B cell (primary cell): ENCODE measurements at regions of chr19 and their contacts with region 1.

Region 1: DNA sequence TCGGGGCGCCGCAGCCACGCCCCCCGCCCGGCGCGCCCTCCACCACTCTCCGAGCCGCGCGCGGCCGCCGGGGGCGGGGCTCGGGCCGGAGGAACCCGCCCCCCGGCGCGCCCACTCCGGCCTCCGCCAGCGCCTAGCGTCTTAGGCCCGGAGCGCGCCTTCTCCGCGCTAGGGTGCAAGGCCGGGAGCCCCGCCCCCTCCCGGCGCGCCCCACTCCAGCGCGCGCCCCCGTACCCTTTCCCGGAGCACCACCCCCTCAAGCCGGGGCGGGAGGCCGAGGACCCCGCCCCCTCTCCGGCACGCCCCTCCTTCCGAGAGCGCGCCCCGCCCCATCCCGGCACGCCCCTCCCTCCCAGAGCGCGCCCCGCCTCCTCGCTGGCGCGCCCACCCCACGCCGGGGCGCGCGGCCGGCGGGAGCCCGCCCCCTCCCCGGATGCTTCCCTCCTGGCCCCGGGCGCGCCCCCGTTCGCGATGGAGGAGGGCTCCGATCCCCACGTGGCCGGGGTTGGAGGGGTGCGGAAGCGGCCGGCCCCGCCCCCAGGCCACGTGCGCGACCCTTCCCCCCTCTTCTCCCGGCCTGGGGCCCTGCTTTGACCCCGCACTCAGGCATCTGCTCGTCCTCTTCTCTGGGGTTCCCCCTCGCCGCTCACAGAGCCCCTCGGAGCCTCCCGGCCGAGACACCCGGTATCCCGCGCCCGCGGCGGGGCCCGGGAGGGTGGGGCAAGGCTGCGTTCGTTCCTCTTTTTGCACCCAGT is 524 bp upstream of the KLF16 start:
- DNase-seq: peak; percentile 97
- ATAC-seq: peak; percentile 66
- H3K4me3 ChIP-seq: peak overlapping the region in 4 of 5 experiments; percentile 67 to 90 (median 72)
- H3K4me3 Mint-ChIP-seq: peak overlapping the region; percentile 82
- H3K27ac ChIP-seq: peak overlapping the region; percentile 90 to 95
- H3K27ac Mint-ChIP-seq: peak overlapping the region; percentile 93
- H3K4me1 ChIP-seq: peaks cover 26 to 42% of the 10 kb centered on the region in 2 donors
- H3K4me1 Mint-ChIP-seq: peaks cover 33% of the 10 kb centered on the region
- H3K27me3 ChIP-seq: no peaks in the 10 kb centered on the region
- H3K27me3 Mint-ChIP-seq: no peaks in the 10 kb centered on the region
- CTCF ChIP-seq: no peak

Region 2: DNA sequence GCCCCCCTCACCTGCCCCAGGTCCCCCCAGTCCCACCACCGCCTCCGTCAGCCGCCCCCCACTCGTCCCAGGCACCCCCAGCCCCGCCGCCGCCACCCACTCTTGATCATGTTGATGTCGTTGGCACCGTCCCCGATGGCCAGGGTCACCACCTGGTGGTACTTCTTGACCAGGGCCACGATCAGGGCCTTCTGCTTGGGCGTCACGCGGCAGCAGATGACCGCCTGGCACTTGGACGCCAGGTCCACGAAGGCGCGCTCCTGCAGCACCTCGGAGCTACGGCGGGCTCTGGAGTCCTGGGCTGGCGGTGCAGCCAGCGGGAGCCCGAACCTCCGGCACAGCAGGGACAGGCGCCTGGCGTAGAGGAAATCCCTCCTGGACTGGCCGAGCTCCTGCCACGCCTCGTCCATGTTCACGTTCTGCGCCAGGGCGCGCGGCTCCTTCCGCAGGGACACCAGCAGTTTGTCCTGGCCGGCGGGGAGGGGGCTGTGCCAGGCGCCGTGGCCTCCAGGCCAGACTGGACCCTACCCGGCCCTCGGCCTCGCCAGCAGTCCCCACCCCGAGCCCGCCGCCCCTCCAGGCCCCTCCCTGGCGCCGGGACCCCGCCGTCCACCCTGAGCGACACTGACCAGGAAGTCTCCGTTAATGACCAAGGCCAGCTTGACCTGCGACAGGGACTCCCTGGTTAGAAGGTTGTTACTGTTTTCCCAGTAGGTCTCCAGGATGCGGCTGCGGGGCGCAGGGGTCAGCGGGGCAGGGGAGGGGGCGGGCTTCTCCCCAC is 74.5 kb before region 1 on chr19:
- CTCF ChIA-PET with region 1: no interaction called
- POLR2A ChIA-PET with region 1: no interaction called
- intact Hi-C with region 1: no loop called
- DNase-seq: no peak
- ATAC-seq: no peak
- H3K4me3 ChIP-seq: no peak overlapping the region
- H3K4me3 Mint-ChIP-seq: no peak overlapping the region
- H3K27ac ChIP-seq: no peak overlapping the region
- H3K27ac Mint-ChIP-seq: no peak overlapping the region
- H3K4me1 ChIP-seq: peaks cover 0 to 3% of the 10 kb centered on the region in 2 donors
- H3K4me1 Mint-ChIP-seq: no peaks in the 10 kb centered on the region
- H3K27me3 ChIP-seq: peaks cover 0 to 39% (median 2%) of the 10 kb centered on the region in 4 experiments
- H3K27me3 Mint-ChIP-seq: peaks cover 8% of the 10 kb centered on the region
- CTCF ChIP-seq: no peak

Region 3: GRCh38 chr19:1848399-1849131 is 15.3 kb before region 1 on chr19 and contains the start of gene REXO1:
- CTCF ChIA-PET with region 1: interaction called, 6 read pairs
- POLR2A ChIA-PET with region 1: interaction called, 4 read pairs
- intact Hi-C with region 1: loop called (anchors 1 kb)
- DNase-seq: peak; percentile 100
- ATAC-seq: peak; percentile 73
- H3K4me3 ChIP-seq: peak within 1 kb of the TSS; percentile 47 to 95 (median 83)
- H3K4me3 Mint-ChIP-seq: peak within 1 kb of the TSS; percentile 90
- H3K27ac ChIP-seq: peak within 1 kb of the TSS; percentile 95 to 97
- H3K27ac Mint-ChIP-seq: peak within 1 kb of the TSS; percentile 93
- H3K4me1 ChIP-seq: peaks cover 59 to 80% of the 10 kb centered on the region in 2 donors
- H3K4me1 Mint-ChIP-seq: peaks cover 63% of the 10 kb centered on the region
- H3K27me3 ChIP-seq: no peaks in the 10 kb centered on the region
- H3K27me3 Mint-ChIP-seq: no peaks in the 10 kb centered on the region
- CTCF ChIP-seq: peak; percentile 87
- total RNA-seq, gene REXO1: 72.4 and 72.6 TPM in 2 replicates

Region 4: GRCh38 chr19:1896508-1896907 is 32.6 kb after region 1 on chr19:
- CTCF ChIA-PET with region 1: interaction called, 16 read pairs
- POLR2A ChIA-PET with region 1: interaction called, 22 read pairs
- intact Hi-C with region 1: loop called (anchors 1 kb)
- DNase-seq: no peak
- ATAC-seq: no peak
- H3K4me3 ChIP-seq: peak overlapping the region in 1 of 5 experiments; percentile 63
- H3K4me3 Mint-ChIP-seq: peak overlapping the region; percentile 54
- H3K27ac ChIP-seq: peak overlapping the region; percentile 80 to 84
- H3K27ac Mint-ChIP-seq: peak overlapping the region; percentile 81
- H3K4me1 ChIP-seq: peaks cover 44 to 56% of the 10 kb centered on the region in 2 donors
- H3K4me1 Mint-ChIP-seq: peaks cover 37% of the 10 kb centered on the region
- H3K27me3 ChIP-seq: no peaks in the 10 kb centered on the region
- H3K27me3 Mint-ChIP-seq: no peaks in the 10 kb centered on the region
- CTCF ChIP-seq: no peak

Region 5: DNA sequence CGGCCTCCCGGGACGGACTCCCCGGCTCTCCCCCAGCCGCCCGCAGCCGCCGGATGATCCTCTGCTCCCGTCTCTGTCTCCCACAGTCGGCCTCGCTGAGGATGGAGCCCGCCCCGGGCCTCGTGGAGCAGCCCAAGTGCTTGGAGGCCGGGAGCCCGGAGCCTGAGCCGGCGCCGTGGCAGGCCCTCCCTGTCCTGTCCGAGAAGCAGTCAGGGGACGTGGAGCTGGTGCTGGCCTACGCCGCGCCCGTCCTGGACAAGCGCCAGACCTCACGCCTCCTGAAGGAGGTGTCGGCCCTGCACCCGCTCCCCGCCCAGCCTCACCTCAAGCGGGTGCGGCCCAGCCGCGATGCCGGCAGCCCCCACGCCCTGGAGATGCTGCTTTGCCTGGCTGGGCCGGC is 48.1 kb after region 1 on chr19:
- CTCF ChIA-PET with region 1: interaction called, 6 read pairs
- POLR2A ChIA-PET with region 1: interaction called, 12 read pairs
- intact Hi-C with region 1: no loop called
- DNase-seq: no peak
- ATAC-seq: no peak
- H3K4me3 ChIP-seq: no peak overlapping the region
- H3K4me3 Mint-ChIP-seq: no peak overlapping the region
- H3K27ac ChIP-seq: no peak overlapping the region
- H3K27ac Mint-ChIP-seq: no peak overlapping the region
- H3K4me1 ChIP-seq: peaks cover 20 to 37% of the 10 kb centered on the region in 2 donors
- H3K4me1 Mint-ChIP-seq: peaks cover 24% of the 10 kb centered on the region
- H3K27me3 ChIP-seq: no peaks in the 10 kb centered on the region
- H3K27me3 Mint-ChIP-seq: no peaks in the 10 kb centered on the region
- CTCF ChIP-seq: no peak

Region 6: DNA sequence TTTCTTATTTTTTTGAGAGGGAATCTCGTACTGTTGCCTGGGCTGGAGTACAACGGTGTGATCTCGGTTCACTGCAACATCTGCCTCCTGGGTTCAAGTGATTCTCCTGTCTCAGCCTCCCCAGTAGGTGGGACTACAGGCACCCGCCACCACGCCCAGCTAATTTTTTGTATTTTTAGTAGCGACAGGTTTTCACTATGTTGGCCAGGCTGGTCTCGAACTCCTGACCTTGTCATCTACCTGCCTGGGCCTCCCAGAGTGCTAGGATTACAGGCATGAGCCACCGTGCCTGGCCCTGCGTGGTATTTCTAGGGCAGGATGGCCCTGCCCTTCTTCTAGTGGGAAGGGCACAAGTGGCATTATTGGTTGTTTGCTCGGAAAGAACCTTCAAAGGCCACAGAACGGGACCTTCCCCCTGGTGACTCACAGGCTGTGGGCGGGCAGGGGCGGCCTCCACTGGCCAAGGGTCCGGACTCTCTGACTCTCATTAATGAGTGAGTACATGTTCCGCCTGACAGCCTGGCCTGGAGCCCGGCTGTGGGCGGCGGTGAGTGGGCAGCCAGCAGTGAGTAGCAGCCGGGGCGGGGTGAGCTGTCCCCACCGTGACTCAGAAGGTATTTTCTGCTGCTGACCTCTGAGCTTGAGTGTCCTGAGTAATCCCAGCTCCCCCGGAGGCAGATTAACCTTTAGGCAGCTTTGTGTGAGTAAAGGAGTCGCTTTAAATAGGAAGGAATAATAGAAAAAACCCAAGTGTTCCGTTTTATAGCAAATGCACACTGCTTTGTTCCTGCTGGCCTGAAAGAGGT is 304.9 kb after region 1 on chr19:
- CTCF ChIA-PET with region 1: no interaction called
- POLR2A ChIA-PET with region 1: no interaction called
- intact Hi-C with region 1: loop called (anchors 5 kb)
- DNase-seq: peak; percentile 81
- ATAC-seq: peak; percentile 44
- H3K4me3 ChIP-seq: peak overlapping the region; percentile 16 to 64 (median 37)
- H3K4me3 Mint-ChIP-seq: peak overlapping the region; percentile 88
- H3K27ac ChIP-seq: peak overlapping the region; percentile 90 to 95
- H3K27ac Mint-ChIP-seq: peak overlapping the region; percentile 95
- H3K4me1 ChIP-seq: peaks cover 66 to 88% of the 10 kb centered on the region in 2 donors
- H3K4me1 Mint-ChIP-seq: peaks cover 69% of the 10 kb centered on the region
- H3K27me3 ChIP-seq: no peaks in the 10 kb centered on the region
- H3K27me3 Mint-ChIP-seq: no peaks in the 10 kb centered on the region
- CTCF ChIP-seq: no peak